Activated T-helper 2 cell treated with anti-CD3 and anti-CD28 coated beads, Interferon-gamma antibody, Interleukin-2, Interleukin-4, amounts not matched to agents 10 μg/mL and 5 μg/mL and 100 μg/mL, durations not matched to agents 14 hours and 24 hours and 36 hours (primary cell): ENCODE measurements at regions of chr16 and their contacts with region 1.

Region 1: GRCh38 chr16:50806099-50807062 is 64.5 kb downstream of the CYLD start:
- DNase-seq: peak; percentile 78
- H3K4me3 Mint-ChIP-seq: peak overlapping the region; percentile 68
- H3K27ac Mint-ChIP-seq: peak overlapping the region; percentile 47
- H3K4me1 Mint-ChIP-seq: peaks cover 12% of the 10 kb centered on the region
- H3K27me3 Mint-ChIP-seq: peaks cover 2% of the 10 kb centered on the region

Region 2: DNA sequence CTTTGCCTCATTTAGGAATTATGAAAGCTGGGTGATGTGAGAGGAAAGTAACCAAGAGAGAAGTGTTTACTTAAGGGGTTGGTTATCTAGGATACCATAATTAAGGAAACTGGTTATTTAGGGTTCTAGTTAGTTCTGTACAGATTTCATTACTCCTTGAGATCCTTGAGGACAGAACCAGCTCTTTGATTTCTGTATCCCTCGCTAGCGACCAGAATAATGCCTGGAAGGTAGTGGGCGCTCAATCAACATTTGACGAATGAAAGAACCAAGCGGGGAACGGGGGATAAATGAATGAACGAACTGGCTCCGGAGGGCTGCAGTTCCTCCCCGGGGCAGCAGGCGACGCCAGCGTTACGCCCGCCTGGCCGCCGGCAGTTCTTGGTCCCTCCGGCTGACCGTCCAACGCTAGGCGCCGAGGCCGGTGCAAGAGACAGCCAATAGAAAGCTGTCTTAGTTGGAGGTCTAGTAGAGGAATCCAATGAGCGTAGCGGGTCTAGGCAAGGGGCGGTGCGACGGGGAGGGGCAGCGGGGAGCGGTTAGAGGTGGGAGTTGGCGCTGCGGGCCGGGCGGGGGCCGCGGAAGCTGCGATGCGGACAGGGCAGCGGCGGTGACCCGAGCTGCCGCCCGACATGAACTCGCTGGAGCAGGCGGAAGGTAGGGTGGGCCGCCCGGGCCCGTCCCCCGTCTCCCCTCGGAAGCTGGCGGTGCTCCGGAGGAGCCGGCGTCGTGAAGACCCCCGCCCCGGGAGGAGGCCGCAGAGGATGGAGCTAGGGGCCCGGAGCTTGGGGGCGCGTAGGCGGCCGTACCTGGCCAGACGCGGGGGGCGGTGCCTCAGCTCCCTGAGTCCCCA is 781.5 kb before region 1 on chr16 and contains the start of gene CNEP1R1:
- intact Hi-C with region 1: loop called (anchors 1 kb)
- DNase-seq: peak; percentile 93
- H3K4me3 Mint-ChIP-seq: peak within 1 kb of the TSS; percentile 95
- H3K27ac Mint-ChIP-seq: peak within 1 kb of the TSS; percentile 84
- H3K4me1 Mint-ChIP-seq: peaks cover 18% of the 10 kb centered on the region
- H3K27me3 Mint-ChIP-seq: peaks cover 4% of the 10 kb centered on the region
- total RNA-seq, gene CNEP1R1: 23.4 and 26.1 TPM in 2 replicates

Region 3: GRCh38 chr16:50368410-50369132 is 437.8 kb before region 1 on chr16 and contains the start of gene BRD7:
- intact Hi-C with region 1: loop called (anchors 5 kb)
- DNase-seq: peak; percentile 59
- H3K4me3 Mint-ChIP-seq: peak within 1 kb of the TSS; percentile 99
- H3K27ac Mint-ChIP-seq: peak within 1 kb of the TSS; percentile 94
- H3K4me1 Mint-ChIP-seq: peaks cover 40% of the 10 kb centered on the region
- H3K27me3 Mint-ChIP-seq: no peaks in the 10 kb centered on the region
- total RNA-seq, gene BRD7: 76.0 and 79.5 TPM in 2 replicates

Region 4: GRCh38 chr16:50548125-50548908 is 258.1 kb before region 1 on chr16 and contains the start of gene NKD1:
- intact Hi-C with region 1: loop called (anchors 1 kb)
- DNase-seq: peak; percentile 59
- H3K4me3 Mint-ChIP-seq: peak within 1 kb of the TSS; percentile 90
- H3K27ac Mint-ChIP-seq: peak within 1 kb of the TSS; percentile 28
- H3K4me1 Mint-ChIP-seq: peaks cover 4% of the 10 kb centered on the region
- H3K27me3 Mint-ChIP-seq: peaks cover 67% of the 10 kb centered on the region
- total RNA-seq, gene NKD1: 0.96 and 1.8 TPM in 2 replicates

Region 5: DNA sequence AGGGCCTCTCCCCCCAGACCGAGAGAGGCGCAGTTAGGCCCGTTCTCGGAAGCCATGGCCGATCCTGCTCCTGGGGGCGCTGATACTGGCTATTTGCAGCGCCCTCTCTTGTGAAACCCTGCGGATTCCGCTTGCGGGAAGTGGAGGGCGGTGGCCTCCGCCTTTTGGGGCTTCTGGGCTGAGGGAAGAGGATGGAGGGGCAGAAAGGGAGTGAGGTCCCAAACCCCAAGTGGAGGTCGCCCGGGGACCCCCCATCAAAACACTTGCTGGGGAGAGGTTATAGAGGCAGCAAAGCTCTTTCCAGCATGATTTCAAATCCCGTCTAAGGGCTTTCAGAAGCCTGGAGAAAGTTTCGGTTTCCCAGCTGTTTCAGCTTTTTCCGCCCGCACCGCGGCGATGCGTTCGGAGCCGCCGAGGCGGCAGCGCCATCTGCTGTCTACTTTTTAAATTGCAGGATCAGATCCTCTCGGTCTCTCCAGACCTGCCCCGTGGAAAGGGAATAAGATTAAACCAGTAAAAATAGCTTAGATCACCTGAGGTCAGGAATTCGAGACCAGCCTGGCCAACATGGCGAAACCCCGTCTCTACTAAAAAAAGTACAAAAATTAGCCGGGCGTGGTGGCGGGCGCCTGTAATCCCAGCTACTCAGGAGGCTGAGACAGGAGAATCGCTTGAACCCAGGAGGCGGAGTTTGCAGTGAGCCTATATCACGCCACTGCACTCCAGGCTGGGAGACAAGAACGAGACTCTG is 141.1 kb before region 1 on chr16:
- intact Hi-C with region 1: loop called (anchors 1 kb)
- DNase-seq: peak; percentile 74
- H3K4me3 Mint-ChIP-seq: peak overlapping the region; percentile 55
- H3K27ac Mint-ChIP-seq: peak overlapping the region; percentile 17
- H3K4me1 Mint-ChIP-seq: peaks cover 34% of the 10 kb centered on the region
- H3K27me3 Mint-ChIP-seq: no peaks in the 10 kb centered on the region

Region 6: GRCh38 chr16:50671644-50672260 is 134.6 kb before region 1 on chr16:
- intact Hi-C with region 1: loop called (anchors 1 kb)
- DNase-seq: peak; percentile 56
- H3K4me3 Mint-ChIP-seq: no peak overlapping the region
- H3K27ac Mint-ChIP-seq: peak overlapping the region; percentile 3
- H3K4me1 Mint-ChIP-seq: peaks cover 30% of the 10 kb centered on the region
- H3K27me3 Mint-ChIP-seq: no peaks in the 10 kb centered on the region